Heart right ventricle (tissue), 16 donors: ENCODE measurements at regions of chr7 and their contacts with region 1.

Region 1: DNA sequence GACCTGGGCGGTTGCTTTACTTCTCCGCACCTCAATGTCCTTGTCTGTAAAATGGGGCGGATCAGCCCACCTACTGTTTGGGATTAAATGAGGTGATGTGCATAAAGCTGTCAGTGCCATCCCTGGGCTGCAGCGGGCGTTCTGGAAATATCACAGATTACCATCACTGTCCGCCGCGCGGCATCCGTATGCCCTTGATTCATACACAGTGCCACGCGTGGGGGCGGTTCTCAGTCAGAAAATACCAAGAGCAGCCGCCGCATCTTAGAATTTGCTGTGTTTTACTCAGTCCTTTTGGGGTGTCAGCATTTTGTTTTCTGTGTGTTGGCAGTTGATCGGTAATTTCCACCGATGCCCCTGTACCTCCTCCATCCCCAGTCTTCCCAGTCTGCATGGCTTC is 338.8 kb downstream of the DPP6 start:
- DNase-seq: no peak
- ATAC-seq: no peak
- H3K4me3 ChIP-seq: no peak overlapping the region
- H3K27ac ChIP-seq: no peak overlapping the region
- H3K4me1 ChIP-seq: no peaks in the 10 kb centered on the region
- H3K27me3 ChIP-seq: no peaks in the 10 kb centered on the region
- CTCF ChIP-seq: no peak

Region 2: DNA sequence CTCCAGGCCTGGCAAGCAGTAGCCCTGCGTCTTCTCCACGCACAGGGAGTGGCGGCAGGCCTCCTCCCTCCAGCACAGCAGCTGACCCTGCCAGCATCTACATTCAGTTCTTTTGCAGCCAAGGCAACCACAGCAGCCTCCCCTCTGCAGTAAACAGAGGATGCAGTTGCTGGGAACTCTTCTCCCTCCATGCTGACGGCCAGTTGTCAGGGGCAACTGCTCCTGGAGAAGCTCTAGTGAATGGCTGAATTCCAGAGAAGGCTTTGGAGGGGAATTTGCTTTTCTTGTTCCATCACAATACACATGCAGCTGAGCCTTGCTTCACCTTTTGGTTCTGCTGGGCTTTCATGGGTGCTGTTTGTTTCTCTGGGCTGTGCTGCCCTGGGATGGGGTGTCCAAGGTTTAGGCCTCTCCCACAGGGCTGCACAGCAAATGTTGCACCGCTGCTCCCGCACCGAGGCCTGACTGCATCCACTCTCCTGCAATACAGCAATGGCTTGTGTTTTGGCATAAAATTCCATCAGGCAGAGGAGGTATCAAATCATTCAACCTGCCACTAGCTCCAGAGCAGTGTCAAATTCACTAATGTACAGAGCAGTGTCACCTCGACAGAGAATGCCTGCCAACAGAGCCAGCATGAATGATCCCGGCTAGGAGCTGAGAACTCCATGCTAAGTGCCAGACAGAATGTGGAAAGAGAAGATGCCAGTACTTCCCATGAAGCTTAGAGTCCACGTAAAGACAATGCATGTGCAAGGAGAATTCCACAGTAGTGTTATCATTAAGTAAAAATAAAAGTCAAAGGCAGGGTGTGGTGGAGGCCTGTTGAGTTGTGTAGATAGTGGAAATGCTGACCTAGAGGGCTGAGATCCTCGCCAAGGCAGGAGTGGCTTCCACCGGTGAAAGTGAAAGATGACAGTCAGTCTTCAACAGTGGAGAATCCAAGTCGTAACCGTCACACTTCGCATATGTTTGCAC is 60.8 kb after region 1 on chr7:
- intact Hi-C with region 1: loop called in 1 of 10 experiments (anchors 10 kb)
- DNase-seq: no peak
- ATAC-seq: no peak
- H3K4me3 ChIP-seq: no peak overlapping the region
- H3K27ac ChIP-seq: no peak overlapping the region
- H3K4me1 ChIP-seq: no peaks in the 10 kb centered on the region
- H3K27me3 ChIP-seq: no peaks in the 10 kb centered on the region
- CTCF ChIP-seq: no peak